ENCODE measurements at regions of chr13 and their contacts with region 1.

Region 1: DNA sequence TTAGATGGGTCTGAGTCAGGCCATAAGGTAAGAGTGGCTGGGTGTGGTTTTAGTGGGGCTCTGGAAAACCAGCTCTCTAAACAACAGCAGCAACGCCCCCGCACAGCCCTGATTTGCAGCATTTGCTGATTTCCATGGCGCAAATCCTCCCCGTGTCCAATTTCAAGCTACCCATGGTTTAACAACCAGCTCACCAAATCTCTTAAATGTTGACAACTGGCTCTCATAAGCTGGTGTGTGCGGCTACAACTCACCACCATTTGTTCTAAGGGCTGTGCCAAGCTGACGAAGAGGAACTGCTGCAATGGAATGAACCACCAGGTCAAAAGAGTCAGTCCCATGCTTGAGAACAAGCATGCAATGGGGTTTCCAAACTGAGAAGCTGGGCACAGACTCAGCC is 22.9 kb downstream of the PARP4 start:
- DNase-seq: no peak
- ATAC-seq: no peak

Region 2: DNA sequence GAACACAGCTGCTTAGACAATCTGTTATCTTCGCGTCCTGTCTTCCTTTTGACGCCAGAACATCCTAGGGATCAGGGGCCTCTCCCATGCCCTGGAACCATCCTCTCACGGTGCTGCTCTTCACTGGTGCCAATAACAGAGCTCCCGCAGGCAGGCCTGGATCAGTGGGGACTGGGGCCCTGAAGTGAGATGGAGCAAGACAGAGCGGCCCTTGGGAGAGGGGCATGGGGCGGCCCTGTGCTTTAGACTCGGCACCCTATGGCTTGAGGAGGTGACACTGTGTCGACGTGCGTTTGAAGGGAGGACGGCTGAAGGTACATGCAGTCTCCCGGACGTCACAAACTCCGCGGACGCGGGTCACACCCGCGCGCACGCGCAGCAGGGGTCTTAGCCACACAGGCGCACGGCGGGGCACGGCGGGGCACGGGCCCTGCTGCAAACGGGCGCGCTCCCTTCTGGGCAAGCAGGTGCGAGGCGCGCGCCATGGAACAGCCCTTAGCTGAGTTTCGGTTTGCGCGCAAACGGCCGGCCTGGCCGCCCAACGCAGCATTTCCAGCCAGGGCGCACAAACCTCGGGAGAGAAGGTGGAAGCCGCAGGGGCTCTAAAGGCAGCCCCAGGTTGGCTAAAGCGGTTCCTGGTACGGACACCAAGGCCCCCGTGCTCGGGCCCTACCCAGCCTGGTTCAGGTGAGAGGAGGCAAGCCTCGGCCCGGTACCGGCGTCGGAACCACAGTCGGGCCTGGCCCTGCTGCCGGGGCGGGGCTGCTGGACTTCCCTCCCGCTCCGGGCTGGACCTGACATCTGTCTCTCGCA is 257.7 kb after region 1 on chr13:
- intact Hi-C with region 1: loop called (anchors 5 kb)
- DNase-seq: no peak
- ATAC-seq: no peak

Measured in sciatic nerve (tissue), 2 donors.